ENCODE measurements at regions of chr17 and their contacts with region 1.

Region 1: DNA sequence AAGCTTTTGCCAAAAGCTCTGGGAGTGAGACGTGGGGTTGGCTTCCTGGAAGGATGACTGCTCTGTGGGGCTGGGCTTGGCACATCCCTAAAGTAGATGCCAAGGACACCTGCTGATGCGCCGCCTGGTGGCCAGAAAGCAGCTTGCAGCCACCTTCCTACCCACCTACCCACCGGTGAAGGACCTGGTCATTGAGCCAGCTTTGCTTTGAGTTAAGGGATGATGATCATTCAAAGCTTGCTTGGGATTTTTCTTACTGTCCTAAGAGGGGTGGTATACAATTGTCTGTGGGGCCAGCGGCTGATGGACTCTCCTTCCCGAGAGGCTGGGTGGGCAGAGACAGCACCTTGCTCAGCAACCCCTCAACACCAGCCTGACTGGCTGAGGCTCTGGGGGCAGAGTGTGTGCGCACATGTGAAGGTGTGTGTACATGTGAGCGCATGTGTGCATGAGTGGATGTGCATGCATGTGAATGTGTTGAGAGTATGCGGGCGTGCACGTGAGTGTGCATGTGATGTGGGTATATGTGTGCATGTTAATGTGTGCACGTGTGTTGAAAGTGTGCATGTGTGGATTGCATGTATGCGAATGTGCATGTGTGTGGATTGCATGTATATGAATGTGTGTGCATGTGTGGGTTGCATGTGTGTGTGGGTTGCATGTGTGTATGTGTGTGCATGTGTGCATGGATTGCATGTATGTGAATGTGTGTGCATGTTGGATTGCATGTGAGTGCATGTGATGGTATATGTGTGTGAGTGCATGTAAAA is 18.6 kb downstream of the C1QTNF1 start:
- DNase-seq: peak; percentile 86
- H3K4me3 Mint-ChIP-seq: no peak overlapping the region
- H3K27ac Mint-ChIP-seq: no peak overlapping the region
- H3K4me1 Mint-ChIP-seq: peaks cover 27% of the 10 kb centered on the region
- H3K27me3 Mint-ChIP-seq: peaks cover 43% of the 10 kb centered on the region
- CTCF ChIP-seq: peak; percentile 86

Region 2: GRCh38 chr17:78986048-78986648 is 56.5 kb before region 1 on chr17:
- CTCF ChIA-PET with region 1: interaction called, 3 read pairs
- intact Hi-C with region 1: loop called (anchors 2 kb)
- DNase-seq: no peak
- H3K4me3 Mint-ChIP-seq: peak overlapping the region; percentile 42
- H3K27ac Mint-ChIP-seq: peak overlapping the region; percentile 76
- H3K4me1 Mint-ChIP-seq: peaks cover 27% of the 10 kb centered on the region
- H3K27me3 Mint-ChIP-seq: no peaks in the 10 kb centered on the region
- CTCF ChIP-seq: no peak

Region 3: GRCh38 chr17:79019632-79020584 is 22.7 kb before region 1 on chr17:
- CTCF ChIA-PET with region 1: interaction called, 6 read pairs
- intact Hi-C with region 1: loop called (anchors 1 kb)
- DNase-seq: peak; percentile 65
- H3K4me3 Mint-ChIP-seq: no peak overlapping the region
- H3K27ac Mint-ChIP-seq: no peak overlapping the region
- H3K4me1 Mint-ChIP-seq: peaks cover 37% of the 10 kb centered on the region
- H3K27me3 Mint-ChIP-seq: peaks cover 10% of the 10 kb centered on the region
- CTCF ChIP-seq: peak; percentile 60

Measured in Calu3 (cell line).